ENCODE measurements at regions of chr6 and their contacts with region 1.

Region 1: GRCh38 chr6:2846873-2847224 is 5.2 kb upstream of the SERPINB1 start:
- DNase-seq: no peak
- H3K27ac ChIP-seq: no peak overlapping the region
- CTCF ChIP-seq: no peak

Region 2: GRCh38 chr6:2791124-2791974 is 55.5 kb before region 1 on chr6:
- CTCF ChIA-PET with region 1: interaction called, 10 read pairs
- POLR2A ChIA-PET with region 1: interaction called, 5 read pairs
- DNase-seq: peak; percentile 82
- H3K27ac ChIP-seq: peak overlapping the region; percentile 78
- CTCF ChIP-seq: peak; percentile 74

Region 3: GRCh38 chr6:2911171-2911570 is 64.3 kb after region 1 on chr6:
- CTCF ChIA-PET with region 1: interaction called, 21 read pairs
- POLR2A ChIA-PET with region 1: no interaction called
- DNase-seq: no peak
- H3K27ac ChIP-seq: no peak overlapping the region
- CTCF ChIP-seq: no peak

Region 4: GRCh38 chr6:2931970-2932748 is 85.3 kb after region 1 on chr6:
- CTCF ChIA-PET with region 1: interaction called, 20 read pairs
- POLR2A ChIA-PET with region 1: no interaction called
- DNase-seq: peak; percentile 85
- H3K27ac ChIP-seq: no peak overlapping the region
- CTCF ChIP-seq: peak; percentile 98